ENCODE measurements at regions of chr1 and their contacts with region 1.

Region 1: GRCh38 chr1:147640553-147641165 is 29.7 kb downstream of the ACP6 start:
- DNase-seq: peak; percentile 73 to 91
- ATAC-seq: peak; percentile 100
- H3K4me3 ChIP-seq: no peak overlapping the region
- H3K4me3 Mint-ChIP-seq: no peak overlapping the region
- H3K27ac ChIP-seq: no peak overlapping the region
- H3K27ac Mint-ChIP-seq: peak overlapping the region in 1 of 2 donors; percentile 79
- H3K4me1 ChIP-seq: peaks cover 7% of the 10 kb centered on the region
- H3K4me1 Mint-ChIP-seq: peaks cover 4 to 15% of the 10 kb centered on the region in 2 donors
- H3K27me3 ChIP-seq: no peaks in the 10 kb centered on the region
- H3K27me3 Mint-ChIP-seq: peaks cover 0 to 3% of the 10 kb centered on the region in 2 donors
- CTCF ChIP-seq: peak; percentile 86

Region 2: GRCh38 chr1:147413110-147413605 is 227.5 kb before region 1 on chr1:
- intact Hi-C with region 1: no loop called
- DNase-seq: no peak
- ATAC-seq: no peak
- H3K4me3 ChIP-seq: no peak overlapping the region
- H3K4me3 Mint-ChIP-seq: no peak overlapping the region
- H3K27ac ChIP-seq: no peak overlapping the region
- H3K27ac Mint-ChIP-seq: no peak overlapping the region
- H3K4me1 ChIP-seq: no peaks in the 10 kb centered on the region
- H3K4me1 Mint-ChIP-seq: no peaks in the 10 kb centered on the region
- H3K27me3 ChIP-seq: peaks cover 4% of the 10 kb centered on the region
- H3K27me3 Mint-ChIP-seq: peaks cover 16 to 55% of the 10 kb centered on the region in 2 donors
- CTCF ChIP-seq: no peak

Region 3: DNA sequence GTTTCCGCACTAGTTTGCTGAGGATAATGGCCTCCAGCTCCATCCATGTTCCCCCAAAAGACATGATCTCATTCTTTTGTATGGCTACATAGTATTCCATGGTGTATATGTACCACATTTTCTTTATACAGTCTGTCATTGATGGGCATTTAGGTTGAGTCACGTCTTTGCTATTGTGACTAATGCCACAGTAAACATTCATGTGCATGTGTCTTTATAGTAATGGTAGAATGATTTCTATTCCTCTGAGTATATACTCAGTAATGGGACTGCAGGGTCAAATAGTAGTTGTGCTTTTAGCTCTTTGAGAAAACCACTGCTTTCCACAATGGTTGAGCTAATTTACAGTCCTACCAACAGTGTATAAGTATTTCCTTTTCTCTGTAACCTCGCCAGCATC is 177.6 kb before region 1 on chr1:
- intact Hi-C with region 1: no loop called
- DNase-seq: no peak
- ATAC-seq: no peak
- H3K4me3 ChIP-seq: no peak overlapping the region
- H3K4me3 Mint-ChIP-seq: no peak overlapping the region
- H3K27ac ChIP-seq: no peak overlapping the region
- H3K27ac Mint-ChIP-seq: no peak overlapping the region
- H3K4me1 ChIP-seq: no peaks in the 10 kb centered on the region
- H3K4me1 Mint-ChIP-seq: no peaks in the 10 kb centered on the region
- H3K27me3 ChIP-seq: peaks cover 3% of the 10 kb centered on the region
- H3K27me3 Mint-ChIP-seq: peaks cover 28 to 59% of the 10 kb centered on the region in 2 donors
- CTCF ChIP-seq: no peak

Region 4: GRCh38 chr1:147494998-147495580 is 145.6 kb before region 1 on chr1:
- intact Hi-C with region 1: loop called (anchors 1 kb)
- DNase-seq: peak; percentile 48 to 85
- ATAC-seq: peak; percentile 88 to 100 (median 99)
- H3K4me3 ChIP-seq: no peak overlapping the region
- H3K4me3 Mint-ChIP-seq: no peak overlapping the region
- H3K27ac ChIP-seq: no peak overlapping the region
- H3K27ac Mint-ChIP-seq: no peak overlapping the region
- H3K4me1 ChIP-seq: no peaks in the 10 kb centered on the region
- H3K4me1 Mint-ChIP-seq: no peaks in the 10 kb centered on the region
- H3K27me3 ChIP-seq: no peaks in the 10 kb centered on the region
- H3K27me3 Mint-ChIP-seq: peaks cover 11 to 13% of the 10 kb centered on the region in 2 donors
- CTCF ChIP-seq: peak; percentile 87

Region 5: GRCh38 chr1:147599362-147600118 is 41.1 kb before region 1 on chr1:
- intact Hi-C with region 1: loop called (anchors 2 kb)
- DNase-seq: peak; percentile 91 to 96
- ATAC-seq: peak; percentile 81 to 93 (median 83)
- H3K4me3 ChIP-seq: peak overlapping the region; percentile 66
- H3K4me3 Mint-ChIP-seq: peak overlapping the region; percentile 93
- H3K27ac ChIP-seq: peak overlapping the region; percentile 50
- H3K27ac Mint-ChIP-seq: peak overlapping the region; percentile 45 to 93
- H3K4me1 ChIP-seq: peaks cover 18% of the 10 kb centered on the region
- H3K4me1 Mint-ChIP-seq: peaks cover 22 to 24% of the 10 kb centered on the region in 2 donors
- H3K27me3 ChIP-seq: peaks cover 4% of the 10 kb centered on the region
- H3K27me3 Mint-ChIP-seq: no peaks in the 10 kb centered on the region
- CTCF ChIP-seq: no peak

Region 6: GRCh38 chr1:147651213-147651865 is 10.7 kb after region 1 on chr1:
- intact Hi-C with region 1: no loop called
- DNase-seq: no peak
- ATAC-seq: no peak
- H3K4me3 ChIP-seq: no peak overlapping the region
- H3K4me3 Mint-ChIP-seq: no peak overlapping the region
- H3K27ac ChIP-seq: no peak overlapping the region
- H3K27ac Mint-ChIP-seq: no peak overlapping the region
- H3K4me1 ChIP-seq: peaks cover 31% of the 10 kb centered on the region
- H3K4me1 Mint-ChIP-seq: peaks cover 30 to 34% of the 10 kb centered on the region in 2 donors
- H3K27me3 ChIP-seq: no peaks in the 10 kb centered on the region
- H3K27me3 Mint-ChIP-seq: no peaks in the 10 kb centered on the region
- CTCF ChIP-seq: no peak

Region 7: GRCh38 chr1:147700042-147701006 is 59.7 kb after region 1 on chr1:
- intact Hi-C with region 1: loop called (anchors 1 kb)
- DNase-seq: peak; percentile 31 to 78
- ATAC-seq: peak; percentile 85 to 97 (median 91)
- H3K4me3 ChIP-seq: no peak overlapping the region
- H3K4me3 Mint-ChIP-seq: no peak overlapping the region
- H3K27ac ChIP-seq: no peak overlapping the region
- H3K27ac Mint-ChIP-seq: peak overlapping the region in 1 of 2 donors; percentile 8
- H3K4me1 ChIP-seq: peaks cover 4% of the 10 kb centered on the region
- H3K4me1 Mint-ChIP-seq: peaks cover 0 to 4% of the 10 kb centered on the region in 2 donors
- H3K27me3 ChIP-seq: peaks cover 3% of the 10 kb centered on the region
- H3K27me3 Mint-ChIP-seq: peaks cover 15 to 18% of the 10 kb centered on the region in 2 donors
- CTCF ChIP-seq: peak; percentile 77

Region 8: DNA sequence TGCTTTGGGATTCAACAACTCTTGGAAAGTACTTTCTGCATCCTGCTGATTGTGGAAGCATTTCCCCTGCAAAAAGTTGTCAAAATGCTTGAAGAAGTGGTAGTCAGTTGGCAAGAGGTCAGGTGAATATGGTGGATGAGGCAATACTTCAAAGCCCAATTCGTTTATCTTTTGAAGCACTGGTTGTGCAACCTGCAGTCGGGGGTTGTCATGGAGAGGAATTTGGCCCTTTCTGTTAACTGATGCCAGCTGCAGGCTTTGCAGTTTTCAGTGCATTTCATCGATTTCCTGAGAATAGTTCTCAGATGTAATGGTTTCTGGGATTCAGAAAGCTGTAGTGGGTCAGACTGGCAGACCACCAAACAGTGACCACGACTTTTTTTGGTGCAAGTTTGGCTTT is 167.4 kb after region 1 on chr1:
- intact Hi-C with region 1: no loop called
- DNase-seq: no peak
- ATAC-seq: no peak
- H3K4me3 ChIP-seq: no peak overlapping the region
- H3K4me3 Mint-ChIP-seq: no peak overlapping the region
- H3K27ac ChIP-seq: no peak overlapping the region
- H3K27ac Mint-ChIP-seq: no peak overlapping the region
- H3K4me1 ChIP-seq: no peaks in the 10 kb centered on the region
- H3K4me1 Mint-ChIP-seq: no peaks in the 10 kb centered on the region
- H3K27me3 ChIP-seq: no peaks in the 10 kb centered on the region
- H3K27me3 Mint-ChIP-seq: peaks cover 10 to 16% of the 10 kb centered on the region in 2 donors
- CTCF ChIP-seq: no peak

Measured in natural killer cell (primary cell).